ENCODE measurements at regions of chr18 and their contacts with region 1.

Region 1: GRCh38 chr18:9217743-9218451 is 81.3 kb downstream of the ANKRD12 start:
- DNase-seq: no peak
- H3K4me3 Mint-ChIP-seq: no peak overlapping the region
- H3K27ac Mint-ChIP-seq: no peak overlapping the region
- H3K4me1 Mint-ChIP-seq: peaks cover under 1% of the 10 kb centered on the region
- H3K27me3 Mint-ChIP-seq: no peaks in the 10 kb centered on the region

Region 2: GRCh38 chr18:9233771-9234440 is 16.0 kb after region 1 on chr18:
- CTCF ChIA-PET with region 1: interaction called, 15 read pairs
- POLR2A ChIA-PET with region 1: no interaction called
- DNase-seq: no peak
- H3K4me3 Mint-ChIP-seq: no peak overlapping the region
- H3K27ac Mint-ChIP-seq: no peak overlapping the region
- H3K4me1 Mint-ChIP-seq: no peaks in the 10 kb centered on the region
- H3K27me3 Mint-ChIP-seq: no peaks in the 10 kb centered on the region